ENCODE measurements at regions of chr5 and their contacts with region 1.

Region 1: DNA sequence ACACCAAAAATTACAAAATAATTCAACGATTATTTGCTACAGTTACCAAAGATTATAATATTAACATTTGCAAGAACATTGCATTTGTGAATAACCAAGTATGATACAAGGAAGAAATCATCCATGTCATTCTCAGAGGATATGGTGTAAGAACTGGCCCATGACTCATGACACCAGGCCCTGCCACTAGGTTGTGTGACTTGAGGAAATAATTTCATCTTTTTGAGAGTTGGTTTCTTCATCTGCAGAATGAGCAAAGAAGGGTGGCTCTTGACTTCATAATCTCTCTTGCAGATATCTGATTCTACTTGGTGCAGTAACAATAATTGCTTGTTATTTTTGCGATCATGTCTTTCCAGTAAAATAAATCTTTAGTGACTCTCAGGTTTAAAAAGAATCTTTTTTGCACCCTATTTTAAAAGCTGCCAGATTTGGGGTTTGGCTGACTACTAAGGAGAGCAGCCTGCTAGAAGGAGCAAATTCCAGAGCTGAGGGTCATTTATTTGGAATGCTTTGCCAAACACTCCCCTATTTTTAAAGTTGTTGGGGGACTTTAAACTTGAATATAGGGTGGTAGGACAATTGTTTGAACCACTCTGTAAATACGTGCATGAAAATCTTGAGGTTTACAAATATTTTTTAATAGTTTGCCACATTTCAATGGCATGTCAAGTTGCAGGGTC is 23.5 kb downstream of the ITGA1 start:
- DNase-seq: no peak

Region 2: DNA sequence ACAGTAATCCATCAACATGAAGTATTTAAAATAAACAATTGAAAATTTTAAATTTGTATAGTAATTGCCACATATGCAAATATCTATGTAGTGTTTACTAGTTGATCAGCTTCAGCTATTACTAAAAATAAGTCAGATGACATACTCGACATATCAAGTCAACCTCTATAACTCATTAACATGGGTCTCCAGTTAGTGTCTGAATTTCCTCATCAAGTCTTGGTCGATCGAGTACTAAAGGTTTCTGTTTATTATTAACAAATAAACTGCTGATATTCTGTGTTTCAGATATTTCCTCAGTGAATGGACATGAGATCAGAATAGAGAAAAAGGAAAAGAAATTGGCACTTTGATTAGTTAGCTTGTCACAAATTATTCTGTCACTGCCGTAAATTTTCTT is 290.0 kb before region 1 on chr5:
- intact Hi-C with region 1: no loop called
- DNase-seq: no peak

Region 3: GRCh38 chr5:52840277-52841050 is 29.3 kb after region 1 on chr5:
- intact Hi-C with region 1: loop called (anchors 5 kb)
- DNase-seq: peak; percentile 76

Measured in cardiac septum (tissue), 1 donor.